Right ventricle myocardium inferior (tissue), 1 donor: ENCODE measurements at regions of chr6 and their contacts with region 1.

Region 1: DNA sequence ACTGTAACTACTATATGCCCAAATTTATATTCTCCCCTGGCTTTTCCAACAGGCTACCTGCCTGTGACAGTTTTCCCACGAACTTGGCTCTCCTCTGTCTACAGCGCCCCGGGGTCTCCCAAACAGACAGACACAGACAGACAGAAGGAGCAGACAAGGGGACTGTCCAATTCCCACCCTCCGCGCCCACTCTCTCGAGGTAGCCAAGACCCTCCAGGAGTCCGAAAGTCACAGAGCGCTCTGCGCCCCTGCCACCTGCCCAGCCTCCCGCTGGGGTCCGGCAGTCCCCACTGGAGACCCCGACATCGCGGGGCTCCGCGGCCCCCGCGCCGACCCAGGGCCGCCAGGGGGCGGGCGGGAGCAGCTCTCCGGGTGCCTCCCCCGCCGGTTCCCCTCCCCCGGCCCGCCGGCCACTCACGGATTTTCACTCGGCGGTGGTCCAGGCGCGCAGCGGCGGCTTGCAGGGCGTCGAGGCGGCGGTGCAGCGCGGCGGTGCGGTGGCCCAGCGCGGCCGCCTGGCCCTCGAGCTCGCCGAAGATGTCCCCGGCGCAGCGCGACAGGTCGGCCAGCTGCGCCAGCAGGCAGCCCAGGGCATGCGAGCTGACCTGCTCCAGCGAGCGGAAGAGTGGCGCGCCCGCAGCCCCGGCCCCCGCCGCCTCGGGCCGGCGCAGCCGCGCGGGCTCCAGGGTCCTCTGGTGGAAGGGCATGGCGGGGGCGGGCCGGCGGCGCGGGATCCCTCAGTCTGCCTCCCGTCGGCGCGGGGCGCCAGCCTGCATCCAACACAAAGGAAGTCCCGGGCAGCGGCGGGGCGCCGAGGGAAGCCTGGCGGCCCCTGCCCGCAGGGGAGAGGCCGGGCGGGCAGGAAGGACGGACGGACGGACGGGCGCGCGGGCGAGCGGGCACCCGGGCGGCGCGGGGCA is 81.3 kb upstream of the CCDC28A start:
- DNase-seq: peak; percentile 90
- ATAC-seq: peak; percentile 83

Region 2: DNA sequence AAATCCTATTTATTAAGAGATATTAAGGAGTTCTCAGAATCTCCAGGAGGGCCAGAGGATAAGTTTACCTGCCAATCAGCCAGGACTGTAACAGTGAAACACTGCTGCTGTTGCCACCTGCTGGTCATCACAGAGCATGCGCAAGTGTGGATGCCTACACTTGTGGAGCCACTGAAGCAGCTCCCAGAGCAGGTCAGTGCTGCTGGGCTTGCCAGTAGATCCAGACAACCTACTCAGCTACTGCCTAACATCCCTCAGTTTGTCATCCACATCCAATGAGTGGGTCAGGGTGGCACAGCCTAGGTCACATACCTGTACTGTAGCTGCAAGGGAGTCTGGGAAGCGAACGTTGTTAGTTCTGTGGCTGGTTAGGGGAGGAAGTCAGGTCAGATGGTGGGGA is 174.7 kb before region 1 on chr6:
- intact Hi-C with region 1: no loop called
- DNase-seq: peak; percentile 73
- ATAC-seq: no peak

Region 3: GRCh38 chr6:138647006-138647405 is 45.3 kb before region 1 on chr6:
- intact Hi-C with region 1: no loop called
- DNase-seq: no peak
- ATAC-seq: no peak

Region 4: GRCh38 chr6:138773177-138774091 is 81.1 kb after region 1 on chr6 and contains the start of gene CCDC28A:
- intact Hi-C with region 1: loop called (anchors 2 kb)
- DNase-seq: peak; percentile 96
- ATAC-seq: peak; percentile 95
- total RNA-seq, gene CCDC28A: 9.2 TPM

Region 5: GRCh38 chr6:138891255-138891986 is 199.1 kb after region 1 on chr6:
- intact Hi-C with region 1: no loop called
- DNase-seq: no peak
- ATAC-seq: no peak